ENCODE measurements at regions of chr14 and their contacts with region 1.

Region 1: GRCh38 chr14:21455911-21456667 is at the start of gene CHD8:
- DNase-seq: peak; percentile 99 to 100
- ATAC-seq: peak; percentile 100
- H3K4me3 ChIP-seq: peak within 1 kb of the TSS; percentile 60 to 92
- H3K27ac ChIP-seq: peak within 1 kb of the TSS; percentile 83 to 88
- H3K4me1 ChIP-seq: peaks cover 0 to 2% of the 10 kb centered on the region in 2 donors
- H3K27me3 ChIP-seq: no peaks in the 10 kb centered on the region
- total RNA-seq, gene CHD8: 66.0 to 73.3 TPM

Region 2: DNA sequence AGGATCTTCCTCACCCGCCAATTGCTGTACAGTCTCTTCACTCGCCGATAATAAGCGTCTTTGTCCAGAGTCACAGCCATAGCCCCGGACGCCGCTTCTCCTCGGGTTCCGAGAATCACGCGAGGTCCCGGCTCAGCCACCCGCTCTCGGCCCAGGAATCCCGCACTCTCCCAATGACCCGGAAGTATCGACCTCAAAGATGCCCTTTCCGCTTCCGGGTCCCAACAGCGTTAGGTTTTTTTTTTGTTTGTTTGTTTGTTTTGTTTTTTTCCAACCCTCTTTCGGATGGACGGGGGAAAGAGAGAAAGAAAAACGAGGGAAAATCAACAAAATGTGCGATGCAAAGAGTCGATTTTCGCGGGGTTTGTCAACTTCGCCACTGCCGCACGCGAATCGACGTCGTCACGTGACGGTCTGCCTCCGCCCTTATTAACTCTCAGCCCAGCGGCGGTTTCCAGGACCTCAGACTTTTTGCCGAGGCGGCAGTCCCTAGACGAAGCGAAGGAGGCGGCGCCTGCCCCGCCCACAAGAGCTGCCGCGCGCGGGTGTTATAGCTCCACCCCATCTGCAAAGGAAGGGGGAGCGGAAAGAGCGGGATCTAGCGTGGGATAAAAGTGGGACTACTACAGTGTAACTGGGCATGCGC is 72.1 kb before region 1 on chr14 and contains the start of gene SUPT16H:
- intact Hi-C with region 1: loop called in 1 of 2 experiments (anchors 5 kb)
- DNase-seq: peak; percentile 98 to 99
- ATAC-seq: peak; percentile 100
- H3K4me3 ChIP-seq: peak within 1 kb of the TSS; percentile 77 to 83
- H3K27ac ChIP-seq: peak within 1 kb of the TSS; percentile 72 to 84
- H3K4me1 ChIP-seq: peaks cover 0 to 2% of the 10 kb centered on the region in 2 donors
- H3K27me3 ChIP-seq: no peaks in the 10 kb centered on the region
- total RNA-seq, gene SUPT16H: 47.2 to 50.5 TPM

Region 3: GRCh38 chr14:21437063-21437901 is 18.8 kb before region 1 on chr14:
- intact Hi-C with region 1: loop called (anchors 1 kb)
- DNase-seq: peak; percentile 99 to 100
- ATAC-seq: peak; percentile 100
- H3K4me3 ChIP-seq: peak overlapping the region; percentile 86 to 87
- H3K27ac ChIP-seq: peak overlapping the region; percentile 7 to 81
- H3K4me1 ChIP-seq: no peaks in the 10 kb centered on the region
- H3K27me3 ChIP-seq: no peaks in the 10 kb centered on the region

Region 4: GRCh38 chr14:21476925-21477681 is 21.0 kb after region 1 on chr14 and contains the starts of genes RAB2B and TOX4:
- intact Hi-C with region 1: loop called in 1 of 2 experiments (anchors 2 kb)
- DNase-seq: peak; percentile 96 to 97
- ATAC-seq: peak; percentile 100
- H3K4me3 ChIP-seq: peak within 1 kb of the TSS; percentile 68 to 87
- H3K27ac ChIP-seq: peak within 1 kb of the TSS in 1 of 2 donors; percentile 87
- H3K4me1 ChIP-seq: no peaks in the 10 kb centered on the region
- H3K27me3 ChIP-seq: no peaks in the 10 kb centered on the region
- total RNA-seq, gene RAB2B: 30.5 to 31.6 TPM
- total RNA-seq, gene TOX4: 67.8 to 75.7 TPM

Region 5: DNA sequence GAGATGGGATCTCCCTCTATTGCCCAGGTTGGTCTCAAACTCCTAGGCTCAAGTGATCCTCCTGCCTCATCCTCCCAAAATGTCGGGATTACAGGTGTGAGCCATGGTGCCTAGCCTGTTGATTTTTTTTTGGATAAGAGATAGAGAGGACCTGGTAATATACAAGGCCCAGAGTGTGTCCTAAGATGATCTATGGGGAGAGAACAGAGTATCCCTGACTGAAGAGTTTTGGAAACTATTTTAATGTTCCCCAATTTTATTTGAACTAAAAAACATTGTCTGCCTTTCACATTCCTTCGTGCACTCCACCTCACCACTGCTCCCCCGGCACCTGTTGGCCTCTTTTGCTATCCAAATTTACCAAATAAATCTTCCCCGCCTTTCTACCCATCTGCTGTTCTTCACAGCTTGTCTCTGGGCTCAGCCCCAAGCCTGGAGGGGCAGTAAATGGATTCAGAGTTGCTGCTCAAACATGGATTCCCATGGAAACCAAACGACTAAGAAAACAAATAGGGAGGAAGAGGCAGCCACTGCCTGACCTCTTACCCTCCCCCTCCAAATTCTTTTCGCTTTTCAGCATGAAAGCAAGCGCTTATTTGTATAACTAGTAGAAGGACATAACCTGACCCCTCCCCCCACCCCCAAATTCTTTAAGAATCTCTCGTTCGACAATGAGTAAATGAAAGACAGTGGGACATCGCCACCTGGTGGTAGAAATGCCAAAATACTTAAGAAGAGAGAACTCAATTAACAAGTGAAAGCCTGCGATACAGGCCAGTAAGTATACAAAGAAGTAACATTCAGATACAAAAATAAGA is 101.2 kb after region 1 on chr14:
- intact Hi-C with region 1: loop called in 1 of 2 experiments (anchors 5 kb)
- DNase-seq: peak in 1 of 2 donors; percentile 56
- ATAC-seq: peak; percentile 88
- H3K4me3 ChIP-seq: peak overlapping the region; percentile 26 to 57
- H3K27ac ChIP-seq: no peak overlapping the region
- H3K4me1 ChIP-seq: no peaks in the 10 kb centered on the region
- H3K27me3 ChIP-seq: no peaks in the 10 kb centered on the region

Region 6: DNA sequence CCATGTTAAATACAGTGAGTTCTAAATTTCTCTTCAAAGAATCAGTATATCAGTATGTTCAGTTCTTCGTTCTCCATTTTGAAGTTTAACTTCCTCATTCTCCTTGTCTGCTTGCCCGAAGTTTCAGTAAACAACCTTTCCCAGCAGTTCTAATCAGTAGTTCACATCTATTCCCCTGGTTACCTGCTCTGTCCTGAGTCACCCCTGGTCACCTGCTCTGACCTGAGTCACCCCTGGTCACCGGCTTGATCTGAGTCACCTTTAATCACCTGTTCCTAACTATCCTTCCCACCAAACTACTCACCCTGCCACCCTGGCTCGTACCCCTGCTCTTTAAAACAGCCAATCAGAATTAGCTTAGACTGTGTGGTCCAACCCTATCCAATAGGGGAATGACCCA is 133.2 kb after region 1 on chr14:
- intact Hi-C with region 1: no loop called
- DNase-seq: no peak
- ATAC-seq: no peak
- H3K4me3 ChIP-seq: no peak overlapping the region
- H3K27ac ChIP-seq: no peak overlapping the region
- H3K4me1 ChIP-seq: no peaks in the 10 kb centered on the region
- H3K27me3 ChIP-seq: no peaks in the 10 kb centered on the region

Measured in aorta (tissue), 5 donors.